ENCODE measurements at regions of chr17 and their contacts with region 1.

Region 1: GRCh38 chr17:47949136-47949759 is 7.9 kb downstream of the PNPO start:
- DNase-seq: peak; percentile 87
- ATAC-seq: peak; percentile 82
- H3K4me3 Mint-ChIP-seq: peak overlapping the region; percentile 54
- H3K27ac Mint-ChIP-seq: peak overlapping the region; percentile 77
- H3K4me1 Mint-ChIP-seq: peaks cover 50% of the 10 kb centered on the region
- H3K27me3 Mint-ChIP-seq: no peaks in the 10 kb centered on the region

Region 2: GRCh38 chr17:47810205-47810821 is 138.9 kb before region 1 on chr17:
- CTCF ChIA-PET with region 1: no interaction called
- POLR2A ChIA-PET with region 1: no interaction called
- DNase-seq: no peak
- ATAC-seq: peak; percentile 32
- H3K4me3 Mint-ChIP-seq: no peak overlapping the region
- H3K27ac Mint-ChIP-seq: no peak overlapping the region
- H3K4me1 Mint-ChIP-seq: peaks cover 5% of the 10 kb centered on the region
- H3K27me3 Mint-ChIP-seq: no peaks in the 10 kb centered on the region

Region 3: GRCh38 chr17:47840740-47841603 is 108.3 kb before region 1 on chr17 and contains the start of gene SCRN2:
- CTCF ChIA-PET with region 1: interaction called, 22 read pairs
- POLR2A ChIA-PET with region 1: no interaction called
- DNase-seq: peak; percentile 91
- ATAC-seq: peak; percentile 92
- H3K4me3 Mint-ChIP-seq: peak within 1 kb of the TSS; percentile 99
- H3K27ac Mint-ChIP-seq: peak within 1 kb of the TSS; percentile 95
- H3K4me1 Mint-ChIP-seq: peaks cover 30% of the 10 kb centered on the region
- H3K27me3 Mint-ChIP-seq: peaks cover 16% of the 10 kb centered on the region
- total RNA-seq, gene SCRN2: 24.1 to 24.8 TPM

Region 4: GRCh38 chr17:47895856-47896671 is 53.2 kb before region 1 on chr17 and contains the start of gene SP2:
- CTCF ChIA-PET with region 1: interaction called, 10 read pairs
- POLR2A ChIA-PET with region 1: interaction called, 8 read pairs
- DNase-seq: peak; percentile 100
- ATAC-seq: peak; percentile 96
- H3K4me3 Mint-ChIP-seq: peak within 1 kb of the TSS; percentile 97
- H3K27ac Mint-ChIP-seq: peak within 1 kb of the TSS; percentile 95
- H3K4me1 Mint-ChIP-seq: peaks cover 44% of the 10 kb centered on the region
- H3K27me3 Mint-ChIP-seq: no peaks in the 10 kb centered on the region
- total RNA-seq, gene SP2: 23.7 to 24.5 TPM

Region 5: DNA sequence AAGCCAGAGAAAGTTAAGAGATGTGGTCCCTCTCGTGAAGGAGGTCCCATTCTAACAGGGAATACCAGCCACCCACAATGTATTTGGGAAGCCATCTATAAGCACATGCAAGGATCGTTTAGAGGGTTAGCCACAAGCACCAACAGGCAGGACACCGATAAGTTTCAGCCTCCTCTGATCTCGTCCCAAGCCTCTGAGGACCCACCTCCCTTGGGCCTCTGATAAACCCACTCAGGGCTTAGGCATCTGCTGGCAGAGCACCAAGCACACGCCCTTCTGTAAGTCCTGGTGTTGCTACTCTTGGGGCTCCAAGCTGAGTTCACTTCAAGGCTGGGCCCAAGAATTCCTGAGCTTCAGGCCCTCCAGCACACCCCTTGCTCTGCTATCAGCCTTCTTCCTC is 13.3 kb before region 1 on chr17:
- CTCF ChIA-PET with region 1: interaction called, 34 read pairs
- POLR2A ChIA-PET with region 1: interaction called, 5 read pairs
- DNase-seq: no peak
- ATAC-seq: no peak
- H3K4me3 Mint-ChIP-seq: no peak overlapping the region
- H3K27ac Mint-ChIP-seq: no peak overlapping the region
- H3K4me1 Mint-ChIP-seq: peaks cover 6% of the 10 kb centered on the region
- H3K27me3 Mint-ChIP-seq: no peaks in the 10 kb centered on the region

Region 6: GRCh38 chr17:48002266-48002915 is 53.1 kb after region 1 on chr17:
- CTCF ChIA-PET with region 1: interaction called, 10 read pairs
- POLR2A ChIA-PET with region 1: no interaction called
- DNase-seq: no peak
- ATAC-seq: no peak
- H3K4me3 Mint-ChIP-seq: no peak overlapping the region
- H3K27ac Mint-ChIP-seq: no peak overlapping the region
- H3K4me1 Mint-ChIP-seq: peaks cover 15% of the 10 kb centered on the region
- H3K27me3 Mint-ChIP-seq: peaks cover 35% of the 10 kb centered on the region

Region 7: GRCh38 chr17:48011405-48012150 is 62.3 kb after region 1 on chr17:
- CTCF ChIA-PET with region 1: interaction called, 120 read pairs
- POLR2A ChIA-PET with region 1: no interaction called
- DNase-seq: peak; percentile 74
- ATAC-seq: peak; percentile 77
- H3K4me3 Mint-ChIP-seq: peak overlapping the region; percentile 63
- H3K27ac Mint-ChIP-seq: no peak overlapping the region
- H3K4me1 Mint-ChIP-seq: peaks cover 22% of the 10 kb centered on the region
- H3K27me3 Mint-ChIP-seq: peaks cover 44% of the 10 kb centered on the region

Region 8: GRCh38 chr17:48058393-48059124 is 109.3 kb after region 1 on chr17:
- CTCF ChIA-PET with region 1: no interaction called
- POLR2A ChIA-PET with region 1: no interaction called
- DNase-seq: no peak
- ATAC-seq: no peak
- H3K4me3 Mint-ChIP-seq: no peak overlapping the region
- H3K27ac Mint-ChIP-seq: no peak overlapping the region
- H3K4me1 Mint-ChIP-seq: peaks cover 24% of the 10 kb centered on the region
- H3K27me3 Mint-ChIP-seq: no peaks in the 10 kb centered on the region

Region 9: DNA sequence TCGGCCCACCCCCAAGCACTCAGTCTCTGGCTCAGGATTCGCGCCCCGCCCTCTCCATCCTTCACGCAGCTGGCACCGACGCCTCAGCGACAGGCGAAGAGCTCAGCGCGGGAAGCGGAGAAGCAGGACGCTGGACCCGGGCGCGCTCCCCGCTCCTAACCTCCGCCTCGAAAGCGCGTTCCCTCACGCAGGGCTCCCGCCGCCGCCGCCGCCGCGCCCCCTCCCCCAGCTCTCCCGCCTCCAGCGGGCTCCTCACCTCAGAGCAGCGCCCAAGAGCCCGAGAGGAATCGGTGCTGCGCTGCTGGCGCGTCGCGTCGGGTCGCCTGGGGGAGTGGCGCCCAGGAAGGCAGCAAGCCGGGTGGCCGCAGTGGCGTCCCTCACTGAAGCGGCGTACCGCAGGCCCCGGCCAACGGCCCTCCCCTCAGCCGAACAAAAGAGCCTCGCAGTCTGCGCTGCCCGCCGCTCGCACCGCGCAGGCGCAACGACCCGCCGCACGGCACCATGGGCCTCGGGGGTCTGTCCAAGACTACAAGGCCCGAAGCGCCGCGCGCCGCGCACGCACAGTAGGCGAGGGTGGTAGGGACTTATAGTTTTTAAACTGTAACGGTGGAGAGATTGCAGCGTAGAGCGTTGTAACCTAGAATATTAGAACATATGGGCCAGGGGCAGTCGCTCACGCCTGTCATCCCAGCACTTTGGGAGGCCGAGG is 151.9 kb after region 1 on chr17 and contains the start of gene CBX1:
- CTCF ChIA-PET with region 1: no interaction called
- POLR2A ChIA-PET with region 1: no interaction called
- DNase-seq: peak; percentile 96
- ATAC-seq: peak; percentile 96
- H3K4me3 Mint-ChIP-seq: peak within 1 kb of the TSS; percentile 99
- H3K27ac Mint-ChIP-seq: peak within 1 kb of the TSS; percentile 88
- H3K4me1 Mint-ChIP-seq: peaks cover 52% of the 10 kb centered on the region
- H3K27me3 Mint-ChIP-seq: no peaks in the 10 kb centered on the region
- total RNA-seq, gene CBX1: 68.2 to 70.3 TPM

Region 10: GRCh38 chr17:48162946-48163506 is 213.8 kb after region 1 on chr17:
- CTCF ChIA-PET with region 1: no interaction called
- POLR2A ChIA-PET with region 1: no interaction called
- DNase-seq: no peak
- ATAC-seq: no peak
- H3K4me3 Mint-ChIP-seq: no peak overlapping the region
- H3K27ac Mint-ChIP-seq: peak overlapping the region; percentile 9
- H3K4me1 Mint-ChIP-seq: peaks cover 9% of the 10 kb centered on the region
- H3K27me3 Mint-ChIP-seq: no peaks in the 10 kb centered on the region